RWPE1 (cell line): ENCODE measurements at regions of chr11 and their contacts with region 1.

Region 1: GRCh38 chr11:8328848-8329330 is 65.2 kb upstream of the LMO1 start:
- DNase-seq: peak; percentile 90
- H3K27ac ChIP-seq: no peak overlapping the region
- CTCF ChIP-seq: peak; percentile 61

Region 2: GRCh38 chr11:8277691-8278090 is 51.2 kb before region 1 on chr11:
- CTCF ChIA-PET with region 1: interaction called, 10 read pairs
- POLR2A ChIA-PET with region 1: no interaction called
- DNase-seq: no peak
- H3K27ac ChIP-seq: no peak overlapping the region
- CTCF ChIP-seq: no peak

Region 3: GRCh38 chr11:8384199-8384821 is 55.4 kb after region 1 on chr11:
- CTCF ChIA-PET with region 1: no interaction called
- POLR2A ChIA-PET with region 1: no interaction called
- DNase-seq: no peak
- H3K27ac ChIP-seq: no peak overlapping the region
- CTCF ChIP-seq: no peak